ENCODE measurements at regions of chr18 and their contacts with region 1.

Region 1: DNA sequence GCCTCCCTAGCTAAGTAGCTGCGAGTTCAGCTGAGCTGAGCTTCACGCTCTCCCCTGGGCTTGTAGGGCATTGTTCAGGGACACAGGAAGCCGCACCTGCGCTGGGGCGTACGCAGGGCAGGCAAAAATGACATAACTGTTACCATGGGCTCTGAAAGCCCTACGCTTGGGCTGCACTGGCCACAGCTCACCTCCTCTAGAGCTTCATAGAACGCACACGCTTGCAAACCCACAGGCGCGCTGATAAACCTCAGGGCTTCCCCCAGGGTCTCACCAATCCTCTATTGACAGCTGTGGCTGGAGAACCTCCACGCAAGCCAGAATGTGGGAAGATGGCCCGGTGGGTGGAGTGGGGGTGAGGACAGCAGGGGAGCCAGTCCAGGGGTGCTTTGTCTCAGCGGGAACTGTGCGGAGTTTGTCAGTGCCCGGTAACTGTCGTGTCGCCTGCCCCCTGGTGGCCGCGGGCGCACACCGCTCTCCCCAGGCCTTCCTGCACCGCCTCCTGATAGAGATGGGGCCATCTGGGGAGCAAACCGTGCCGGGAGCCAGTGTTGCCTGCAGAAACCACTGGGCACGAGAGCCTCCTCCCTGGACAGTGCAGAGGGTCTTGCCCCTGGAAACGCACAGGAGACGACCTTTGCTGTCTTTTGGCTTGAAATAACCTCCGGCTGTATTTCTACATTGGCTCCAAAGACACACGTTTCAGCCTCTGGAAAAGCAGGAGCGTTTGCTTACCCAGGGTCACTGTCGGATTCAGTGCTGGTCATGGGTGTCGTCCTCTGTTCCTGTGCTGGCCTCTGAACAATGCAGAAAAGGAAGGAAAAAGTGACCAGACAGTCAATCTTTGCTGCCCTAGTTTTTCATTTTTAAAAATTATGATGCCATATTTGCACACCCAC is 17.0 kb upstream of the CIDEA start:
- DNase-seq: peak; percentile 36
- ATAC-seq: peak; percentile 96
- H3K4me3 ChIP-seq: no peak overlapping the region
- H3K27ac ChIP-seq: no peak overlapping the region
- H3K4me1 ChIP-seq: peaks cover 6% of the 10 kb centered on the region
- H3K27me3 ChIP-seq: peaks cover 10% of the 10 kb centered on the region
- CTCF ChIP-seq: peak; percentile 76
- POLR2A ChIP-seq: no peak
- RAD21 ChIP-seq: peak; percentile 57

Region 2: GRCh38 chr18:12049978-12050811 is 187.0 kb before region 1 on chr18:
- CTCF ChIA-PET with region 1: no interaction called
- POLR2A ChIA-PET with region 1: no interaction called
- dilution Hi-C with region 1: no loop called
- in situ Hi-C with region 1: no loop called
- intact Hi-C with region 1: loop called (anchors 10 kb)
- DNase-seq: no peak
- ATAC-seq: no peak
- H3K4me3 ChIP-seq: no peak overlapping the region
- H3K27ac ChIP-seq: no peak overlapping the region
- H3K4me1 ChIP-seq: peaks cover 8% of the 10 kb centered on the region
- H3K27me3 ChIP-seq: no peaks in the 10 kb centered on the region
- CTCF ChIP-seq: no peak
- POLR2A ChIP-seq: no peak
- RAD21 ChIP-seq: no peak

Region 3: GRCh38 chr18:12092398-12093229 is 144.6 kb before region 1 on chr18:
- CTCF ChIA-PET with region 1: no interaction called
- POLR2A ChIA-PET with region 1: no interaction called
- dilution Hi-C with region 1: no loop called
- in situ Hi-C with region 1: no loop called
- intact Hi-C with region 1: loop called (anchors 10 kb)
- DNase-seq: no peak
- ATAC-seq: no peak
- H3K4me3 ChIP-seq: no peak overlapping the region
- H3K27ac ChIP-seq: no peak overlapping the region
- H3K4me1 ChIP-seq: no peaks in the 10 kb centered on the region
- H3K27me3 ChIP-seq: no peaks in the 10 kb centered on the region; the same call in 1 of the 2 replicates
- CTCF ChIP-seq: no peak
- POLR2A ChIP-seq: no peak
- RAD21 ChIP-seq: no peak

Measured in IMR-90 (cell line).